Common myeloid progenitor, CD34-positive (primary cell): ENCODE measurements at regions of chr2 and their contacts with region 1.

Region 1: GRCh38 chr2:231612179-231613053 is 19.8 kb downstream of the TEX44 start:
- DNase-seq: peak; percentile 89 to 94 (median 93)
- H3K4me3 ChIP-seq: peak overlapping the region in 2 of 7 experiments; percentile 68 to 78
- H3K27ac ChIP-seq: peak overlapping the region; percentile 94 to 96
- H3K4me1 ChIP-seq: peaks cover 3 to 63% (median 55%) of the 10 kb centered on the region in 4 experiments
- H3K27me3 ChIP-seq: no peaks in the 10 kb centered on the region

Region 2: DNA sequence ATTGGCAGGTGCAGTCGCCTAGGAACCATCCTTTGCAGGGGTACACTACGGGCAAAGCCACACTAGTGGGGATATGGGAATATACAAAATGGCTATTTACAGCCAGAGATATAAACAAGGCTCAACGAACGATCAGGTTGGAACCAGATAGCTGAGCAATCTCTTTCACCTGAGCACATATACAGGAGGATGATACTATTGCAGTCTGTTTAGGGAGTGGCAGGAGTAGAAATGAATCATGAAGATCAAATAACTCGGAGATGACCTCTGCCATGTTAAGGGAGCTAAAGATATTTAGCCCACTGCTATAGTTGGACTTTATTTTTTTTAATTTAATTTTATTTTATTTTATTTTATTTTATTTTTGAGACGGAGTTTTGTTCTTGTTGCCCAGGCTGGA is 14.0 kb after region 1 on chr2:
- CTCF ChIA-PET with region 1: interaction called, 17 read pairs
- POLR2A ChIA-PET with region 1: no interaction called
- DNase-seq: no peak
- H3K4me3 ChIP-seq: no peak overlapping the region
- H3K27ac ChIP-seq: no peak overlapping the region
- H3K4me1 ChIP-seq: peaks cover 0 to 16% (median 4%) of the 10 kb centered on the region in 4 experiments
- H3K27me3 ChIP-seq: no peaks in the 10 kb centered on the region

Region 3: GRCh38 chr2:231648587-231649174 is 36.3 kb after region 1 on chr2:
- CTCF ChIA-PET with region 1: interaction called, 49 read pairs
- POLR2A ChIA-PET with region 1: interaction called, 32 read pairs
- DNase-seq: peak; percentile 55 to 79 (median 76)
- H3K4me3 ChIP-seq: no peak overlapping the region
- H3K27ac ChIP-seq: no peak overlapping the region
- H3K4me1 ChIP-seq: peaks cover 0 to 31% (median 12%) of the 10 kb centered on the region in 4 experiments
- H3K27me3 ChIP-seq: no peaks in the 10 kb centered on the region

Region 4: GRCh38 chr2:231687133-231687852 is 74.9 kb after region 1 on chr2:
- CTCF ChIA-PET with region 1: interaction called, 12 read pairs
- POLR2A ChIA-PET with region 1: no interaction called
- DNase-seq: peak; percentile 79 to 88 (median 87)
- H3K4me3 ChIP-seq: peak overlapping the region in 6 of 7 experiments; percentile 33 to 70 (median 48)
- H3K27ac ChIP-seq: no peak overlapping the region
- H3K4me1 ChIP-seq: peaks cover 0 to 34% (median 24%) of the 10 kb centered on the region in 4 experiments
- H3K27me3 ChIP-seq: no peaks in the 10 kb centered on the region